ENCODE measurements at regions of chr11 and their contacts with region 1.

Region 1: DNA sequence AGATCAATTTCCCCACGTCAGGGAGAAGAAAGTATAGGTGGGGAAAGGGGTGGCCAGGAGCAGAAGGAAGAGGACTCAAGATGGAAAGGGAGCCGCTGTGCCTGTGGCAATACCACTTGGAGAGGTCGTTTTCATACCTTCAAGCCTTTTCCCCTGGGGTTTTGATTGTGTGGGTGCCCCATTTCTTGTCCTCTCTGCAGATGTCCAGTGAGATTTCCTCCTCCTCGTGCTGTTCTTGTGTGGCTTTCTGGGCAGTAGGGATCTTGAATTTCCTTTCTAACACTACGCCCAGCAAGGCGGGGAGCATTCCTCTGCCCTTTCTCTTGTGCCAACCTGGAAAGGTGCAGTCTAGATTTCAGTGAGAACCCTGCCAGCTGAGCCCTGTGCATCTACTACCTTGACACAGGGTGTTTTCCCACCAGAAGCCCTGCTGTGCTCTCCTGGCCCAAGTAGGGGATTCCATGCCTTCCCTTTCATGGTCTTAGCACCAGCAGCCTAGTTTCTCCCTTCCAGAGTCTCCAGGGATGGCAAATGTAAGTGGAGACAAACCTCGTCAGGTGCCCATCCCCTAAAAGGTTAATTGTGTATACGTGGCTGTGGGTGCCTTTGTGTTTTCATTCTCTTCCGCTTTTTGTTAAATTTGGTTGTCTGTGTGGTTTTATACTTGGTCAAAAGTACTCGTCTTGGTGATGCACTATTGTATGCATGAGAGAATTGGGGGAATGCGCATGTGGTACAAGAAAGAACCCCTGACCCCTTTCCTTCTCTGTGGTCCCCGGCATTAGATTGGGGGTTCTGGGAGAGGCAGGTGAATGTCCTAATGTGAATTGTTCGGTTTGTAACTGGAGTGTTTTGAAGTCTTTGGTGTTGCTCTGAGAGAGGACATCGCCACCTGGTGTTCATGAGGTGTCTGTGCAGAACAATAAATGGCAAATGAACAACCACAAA is 71.4 kb upstream of the MPEG1 start:
- DNase-seq: peak; percentile 50
- CTCF ChIP-seq: peak; percentile 66

Region 2: GRCh38 chr11:59164028-59164427 is 120.1 kb before region 1 on chr11:
- in situ Hi-C with region 1: loop called (anchors 10 kb)
- DNase-seq: no peak
- CTCF ChIP-seq: no peak